KBM-7 (cell line): ENCODE measurements at regions of chr11 and their contacts with region 1.

Region 1: GRCh38 chr11:109971184-109971523 is 122.0 kb upstream of the ZC3H12C start:
- DNase-seq: peak; percentile 73

Region 2: DNA sequence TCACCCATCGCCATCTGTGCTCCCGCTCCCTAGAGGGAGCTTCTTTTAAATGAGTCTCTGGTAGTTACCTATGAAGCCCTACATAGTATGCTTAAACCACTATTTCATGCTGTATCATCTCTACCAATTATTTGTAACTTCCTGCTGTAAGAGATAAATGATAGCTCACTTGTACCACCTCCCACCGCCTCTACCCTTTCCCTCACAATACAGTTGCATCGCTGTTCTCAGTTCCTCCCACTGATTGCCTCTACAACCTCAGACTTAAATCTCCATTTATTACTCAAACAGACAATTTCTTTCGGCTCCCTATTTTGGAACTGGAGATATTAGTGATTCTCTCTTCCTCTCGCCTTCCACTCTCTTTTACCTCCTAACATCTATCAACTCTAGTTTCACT is 100.9 kb before region 1 on chr11:
- in situ Hi-C with region 1: no loop called
- DNase-seq: no peak

Region 3: GRCh38 chr11:110092515-110093404 is 121.6 kb after region 1 on chr11 and contains the start of gene ZC3H12C:
- in situ Hi-C with region 1: loop called (anchors 25 kb)
- DNase-seq: peak; percentile 79

Region 4: DNA sequence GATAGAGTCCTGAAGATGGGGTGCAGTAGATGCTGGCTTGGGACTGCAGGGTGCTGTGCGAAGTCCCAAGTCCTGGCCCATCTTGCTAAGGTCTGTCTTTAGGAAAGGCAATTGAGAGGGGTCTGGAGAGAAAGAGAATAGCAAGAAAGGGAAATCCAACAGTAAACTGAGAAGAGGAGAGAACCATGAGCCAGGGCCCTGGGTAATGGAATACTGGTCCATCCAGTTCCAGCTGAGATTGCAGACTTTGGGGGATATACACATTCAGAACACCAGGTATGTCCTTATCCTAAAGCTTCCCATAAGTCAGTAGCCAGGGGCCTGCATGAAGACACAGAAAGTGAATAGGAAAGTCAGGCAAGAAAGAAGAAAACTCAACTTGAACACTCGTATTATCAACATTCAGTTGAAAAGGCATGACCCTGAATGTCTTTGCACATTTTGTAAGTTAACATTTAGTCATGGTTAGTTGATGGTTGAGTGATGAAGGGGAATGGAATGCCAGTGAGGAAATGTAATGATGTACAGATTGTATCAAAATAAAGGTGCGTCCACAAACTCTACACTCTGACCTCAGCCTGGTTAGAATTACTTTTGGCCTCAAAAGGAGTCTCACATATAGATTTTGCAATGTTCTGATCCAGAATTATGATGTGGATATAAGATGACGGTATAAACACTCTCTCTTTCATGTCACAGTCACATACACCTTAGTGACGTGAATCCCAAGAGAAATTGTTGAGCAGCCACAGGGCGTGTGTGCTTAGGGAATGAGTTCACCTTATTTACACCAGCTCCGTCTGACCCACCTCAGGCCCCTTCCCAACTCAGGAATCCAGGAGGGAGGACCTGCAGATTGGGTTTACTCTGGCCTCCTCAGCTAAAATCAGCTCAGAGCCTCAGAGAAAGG is 224.9 kb after region 1 on chr11:
- in situ Hi-C with region 1: loop called (anchors 25 kb)
- DNase-seq: no peak